ENCODE measurements at regions of chr4 and their contacts with region 1.

Region 1: GRCh38 chr4:87093443-87094123 is 126.8 kb downstream of the KLHL8 start:
- DNase-seq: peak; percentile 68 to 79 (median 75)
- H3K4me3 ChIP-seq: no peak overlapping the region
- H3K27ac ChIP-seq: peak overlapping the region in 1 of 2 experiments; percentile 55
- H3K4me1 ChIP-seq: peaks cover 11 to 26% (median 17%) of the 10 kb centered on the region in 4 experiments
- H3K27me3 ChIP-seq: no peaks in the 10 kb centered on the region

Region 2: GRCh38 chr4:86878640-86879039 is 214.9 kb before region 1 on chr4:
- CTCF ChIA-PET with region 1: no interaction called
- POLR2A ChIA-PET with region 1: no interaction called
- DNase-seq: no peak
- H3K4me3 ChIP-seq: no peak overlapping the region
- H3K27ac ChIP-seq: no peak overlapping the region
- H3K4me1 ChIP-seq: no peaks in the 10 kb centered on the region
- H3K27me3 ChIP-seq: no peaks in the 10 kb centered on the region

Region 3: DNA sequence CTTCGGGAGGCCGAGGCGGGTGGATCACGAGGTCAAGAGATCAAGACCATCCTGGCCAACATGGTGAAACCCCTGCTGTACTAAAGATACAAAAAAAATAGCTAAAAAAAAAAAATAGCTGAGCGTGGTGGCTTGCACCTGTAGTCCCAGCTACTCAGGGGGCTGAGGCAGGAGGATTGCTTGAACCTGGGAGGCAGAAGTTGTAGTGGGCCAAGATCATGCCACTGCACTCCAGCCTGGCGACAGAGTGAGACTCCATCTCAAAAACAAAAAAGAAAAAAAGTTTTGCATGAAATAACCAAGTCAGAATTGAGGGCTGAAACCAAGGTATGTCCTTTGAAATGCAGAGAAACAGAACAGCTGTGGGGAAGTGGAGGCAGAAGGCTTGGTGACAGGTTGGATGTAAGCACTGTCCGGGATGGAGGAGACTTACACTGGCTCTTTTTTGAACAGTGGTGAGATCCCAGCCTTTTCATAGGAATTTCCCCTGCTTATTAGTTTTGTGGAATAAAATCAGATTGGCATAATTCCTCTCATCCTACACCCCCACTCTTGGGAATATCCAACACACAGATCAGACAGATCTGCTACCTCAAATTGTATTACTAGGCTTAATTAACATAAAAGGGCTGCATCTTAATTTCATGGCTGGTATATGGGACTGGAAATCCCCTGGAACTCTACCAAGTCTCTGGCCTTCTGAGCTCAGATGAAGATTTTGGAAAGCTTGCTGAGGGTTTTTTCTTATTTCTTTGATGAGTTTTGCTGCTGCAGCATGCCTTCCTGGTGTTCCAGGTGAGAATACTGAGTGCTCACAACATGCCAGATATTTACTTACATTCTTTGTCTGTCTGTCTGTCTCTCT is 182.5 kb before region 1 on chr4:
- CTCF ChIA-PET with region 1: interaction called, 11 read pairs
- POLR2A ChIA-PET with region 1: no interaction called
- DNase-seq: peak in 2 of 3 donors; percentile 61 to 68
- H3K4me3 ChIP-seq: no peak overlapping the region
- H3K27ac ChIP-seq: no peak overlapping the region
- H3K4me1 ChIP-seq: peaks cover 3 to 44% (median 33%) of the 10 kb centered on the region in 4 experiments
- H3K27me3 ChIP-seq: no peaks in the 10 kb centered on the region

Region 4: DNA sequence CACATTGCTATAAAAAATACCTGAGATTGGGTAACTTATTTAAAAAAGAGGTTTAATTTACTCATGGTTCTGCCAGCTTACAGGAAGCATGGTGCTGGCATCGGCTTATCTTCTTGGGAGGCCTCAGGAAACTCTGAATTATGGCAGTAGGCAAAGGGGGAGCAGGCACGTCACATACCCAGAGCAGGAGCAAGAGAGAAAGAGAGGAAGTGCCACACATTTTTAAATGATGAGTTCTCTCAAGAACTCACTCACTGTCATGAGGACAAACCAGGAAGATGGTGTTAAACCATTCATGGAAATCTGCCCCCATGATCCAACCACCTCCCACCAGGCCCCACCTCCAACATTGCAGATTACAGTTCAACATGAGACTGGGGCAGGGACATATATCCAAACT is 168.8 kb before region 1 on chr4:
- CTCF ChIA-PET with region 1: interaction called, 77 read pairs
- POLR2A ChIA-PET with region 1: interaction called, 5 read pairs
- DNase-seq: peak in 2 of 3 donors; percentile 67 to 84
- H3K4me3 ChIP-seq: no peak overlapping the region
- H3K27ac ChIP-seq: peak overlapping the region in 1 of 2 experiments; percentile 19
- H3K4me1 ChIP-seq: peaks cover 13 to 54% (median 35%) of the 10 kb centered on the region in 4 experiments
- H3K27me3 ChIP-seq: no peaks in the 10 kb centered on the region

Region 5: DNA sequence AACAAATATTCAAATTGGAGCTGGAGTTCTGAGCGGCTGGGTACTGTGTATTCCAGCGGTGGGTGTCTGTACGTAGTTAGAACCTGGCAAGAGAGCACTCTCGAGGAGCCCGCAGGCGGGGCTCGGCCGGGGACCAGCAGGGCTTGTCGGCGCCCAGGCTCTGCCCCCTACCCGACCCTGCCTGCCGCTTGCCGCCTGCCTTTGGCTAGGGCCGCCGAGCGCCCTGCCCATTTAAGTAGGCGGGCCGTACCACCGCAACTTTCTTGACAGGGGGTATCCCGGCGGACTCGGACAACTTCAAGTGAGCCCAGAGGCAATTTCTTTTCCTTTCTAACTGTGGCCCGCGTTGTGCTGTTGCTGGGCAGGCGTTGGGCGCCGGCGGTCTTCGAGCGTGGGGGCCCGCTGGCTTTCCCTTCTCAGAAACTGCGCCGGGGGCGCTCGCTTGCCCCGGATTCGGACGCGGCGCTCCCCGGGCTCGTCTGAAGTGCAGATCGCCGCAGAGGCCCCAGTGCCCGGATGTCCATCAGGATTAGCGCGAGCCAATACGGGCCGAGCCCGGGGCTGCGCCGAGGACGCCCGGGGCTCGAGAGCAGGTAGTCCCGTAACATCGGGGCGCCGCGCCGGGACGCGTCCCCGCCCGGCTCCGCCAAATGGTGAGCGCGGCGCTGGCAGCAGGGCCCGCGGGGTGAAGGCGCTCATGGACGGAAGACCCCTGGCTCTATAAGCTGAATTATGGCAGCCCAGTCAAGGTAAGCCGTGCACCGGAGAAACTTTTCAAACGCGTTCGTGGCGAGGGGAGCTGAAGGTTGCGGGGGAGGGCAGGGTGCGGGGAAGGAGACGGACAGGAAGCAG is 86.7 kb before region 1 on chr4:
- CTCF ChIA-PET with region 1: interaction called, 21 read pairs
- POLR2A ChIA-PET with region 1: interaction called, 7 read pairs
- DNase-seq: peak; percentile 95 to 98 (median 98)
- H3K4me3 ChIP-seq: peak overlapping the region; percentile 90 to 100 (median 96)
- H3K27ac ChIP-seq: peak overlapping the region; percentile 83 to 95
- H3K4me1 ChIP-seq: peaks cover 34 to 61% (median 52%) of the 10 kb centered on the region in 4 experiments
- H3K27me3 ChIP-seq: no peaks in the 10 kb centered on the region

Region 6: DNA sequence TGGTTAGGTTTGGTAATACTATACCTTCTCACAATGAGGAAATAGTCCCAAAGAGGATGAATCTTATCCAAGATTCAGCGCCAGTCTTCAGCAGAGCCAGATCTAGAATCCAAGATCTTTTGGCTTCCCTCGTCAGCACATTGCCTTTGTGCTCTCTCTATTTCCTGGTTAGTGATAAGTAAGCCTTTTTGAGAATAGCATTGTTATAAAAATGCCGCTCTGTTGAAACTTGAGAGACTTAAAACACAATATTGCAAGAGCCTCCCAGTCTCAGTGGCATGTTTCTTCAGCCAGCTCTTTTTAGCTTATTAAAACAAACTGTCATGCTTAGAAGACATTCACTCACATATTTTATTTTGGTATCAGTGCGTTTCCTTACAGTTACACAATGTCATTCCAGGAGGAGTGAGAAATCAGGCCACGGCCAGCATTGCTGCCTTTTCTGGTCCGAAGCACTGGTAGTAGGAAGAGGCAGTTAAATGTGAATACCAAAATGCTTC is 14.5 kb before region 1 on chr4:
- CTCF ChIA-PET with region 1: interaction called, 19 read pairs
- POLR2A ChIA-PET with region 1: no interaction called
- DNase-seq: no peak
- H3K4me3 ChIP-seq: no peak overlapping the region
- H3K27ac ChIP-seq: no peak overlapping the region
- H3K4me1 ChIP-seq: peaks cover 12 to 44% (median 29%) of the 10 kb centered on the region in 4 experiments
- H3K27me3 ChIP-seq: no peaks in the 10 kb centered on the region

Measured in common myeloid progenitor, CD34-positive (primary cell).